ENCODE measurements at regions of chr18 and their contacts with region 1.

Region 1: GRCh38 chr18:59988098-59988706 is 88.4 kb downstream of the PMAIP1 start:
- DNase-seq: no peak
- H3K4me3 ChIP-seq: no peak overlapping the region
- H3K27ac ChIP-seq: no peak overlapping the region
- H3K4me1 ChIP-seq: no peaks in the 10 kb centered on the region
- H3K27me3 ChIP-seq: peaks cover 0 to 5% (median 0%) of the 10 kb centered on the region in 3 donors
- CTCF ChIP-seq: peak; percentile 52 to 86 (median 72)
- EP300 ChIP-seq: no peak
- POLR2A ChIP-seq: no peak

Region 2: GRCh38 chr18:59837586-59837985 is 150.6 kb before region 1 on chr18:
- intact Hi-C with region 1: loop called (anchors 10 kb)
- DNase-seq: no peak
- H3K4me3 ChIP-seq: no peak overlapping the region
- H3K27ac ChIP-seq: no peak overlapping the region
- H3K4me1 ChIP-seq: no peaks in the 10 kb centered on the region
- H3K27me3 ChIP-seq: no peaks in the 10 kb centered on the region
- CTCF ChIP-seq: peak; percentile 43 to 84 (median 68)
- EP300 ChIP-seq: no peak
- POLR2A ChIP-seq: no peak

Region 3: GRCh38 chr18:60549338-60549960 is 561.2 kb after region 1 on chr18:
- intact Hi-C with region 1: loop called (anchors 2 kb)
- DNase-seq: no peak
- H3K4me3 ChIP-seq: no peak overlapping the region
- H3K27ac ChIP-seq: no peak overlapping the region
- H3K4me1 ChIP-seq: no peaks in the 10 kb centered on the region
- H3K27me3 ChIP-seq: no peaks in the 10 kb centered on the region
- CTCF ChIP-seq: peak in 3 of 4 experiments; percentile 27 to 63 (median 39)
- EP300 ChIP-seq: no peak
- POLR2A ChIP-seq: no peak

Region 4: DNA sequence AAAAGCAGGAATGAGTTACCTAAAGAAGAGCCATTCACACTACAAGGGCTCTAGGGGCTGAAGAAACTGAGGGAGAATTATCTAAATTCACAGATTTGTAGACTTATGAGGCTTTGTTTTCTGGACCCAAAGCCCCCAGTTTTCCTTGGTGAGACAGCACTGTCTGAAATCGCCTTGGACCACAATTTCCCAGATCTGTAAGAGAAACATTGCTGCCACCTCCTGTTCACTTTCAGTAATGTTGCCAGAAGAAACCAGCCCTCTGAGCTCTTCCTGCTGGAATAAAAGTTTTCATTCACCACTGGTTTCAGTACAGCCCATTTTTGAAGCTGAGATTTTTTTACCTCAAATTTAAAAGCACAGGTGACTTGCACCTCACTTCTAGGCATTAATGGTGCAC is 1514.3 kb after region 1 on chr18:
- intact Hi-C with region 1: loop called (anchors 5 kb)
- DNase-seq: no peak
- H3K4me3 ChIP-seq: no peak overlapping the region
- H3K27ac ChIP-seq: no peak overlapping the region
- H3K4me1 ChIP-seq: no peaks in the 10 kb centered on the region
- H3K27me3 ChIP-seq: no peaks in the 10 kb centered on the region
- CTCF ChIP-seq: peak in 3 of 4 experiments; percentile 28 to 40 (median 37)
- EP300 ChIP-seq: no peak
- POLR2A ChIP-seq: no peak